ENCODE measurements at regions of chr2 and their contacts with region 1.

Region 1: GRCh38 chr2:9555297-9556141 is at the start of gene ADAM17:
- DNase-seq: peak; percentile 88 to 92
- ATAC-seq: peak; percentile 88 to 97 (median 95)
- H3K4me3 ChIP-seq: peak within 1 kb of the TSS; percentile 69
- H3K4me3 Mint-ChIP-seq: peak within 1 kb of the TSS; percentile 98
- H3K27ac ChIP-seq: peak within 1 kb of the TSS; percentile 100
- H3K27ac Mint-ChIP-seq: peak within 1 kb of the TSS; percentile 92 to 97
- H3K4me1 ChIP-seq: peaks cover 18% of the 10 kb centered on the region
- H3K4me1 Mint-ChIP-seq: peaks cover 52 to 59% of the 10 kb centered on the region in 2 donors
- H3K27me3 ChIP-seq: no peaks in the 10 kb centered on the region
- H3K27me3 Mint-ChIP-seq: no peaks in the 10 kb centered on the region
- CTCF ChIP-seq: peak; percentile 27
- total RNA-seq, gene ADAM17: 44.0 to 53.8 (median 46.8) TPM

Region 2: GRCh38 chr2:9423100-9423921 is 132.2 kb before region 1 on chr2 and contains the starts of genes CPSF3 and ITGB1BP1:
- intact Hi-C with region 1: loop called (anchors 10 kb)
- DNase-seq: peak; percentile 92 to 99
- ATAC-seq: peak; percentile 86 to 94 (median 91)
- H3K4me3 ChIP-seq: peak within 1 kb of the TSS; percentile 86
- H3K4me3 Mint-ChIP-seq: no peak within 1 kb of the TSS
- H3K27ac ChIP-seq: peak within 1 kb of the TSS; percentile 84
- H3K27ac Mint-ChIP-seq: no peak within 1 kb of the TSS
- H3K4me1 ChIP-seq: peaks cover 25% of the 10 kb centered on the region
- H3K4me1 Mint-ChIP-seq: peaks cover 27 to 28% of the 10 kb centered on the region in 2 donors
- H3K27me3 ChIP-seq: no peaks in the 10 kb centered on the region
- H3K27me3 Mint-ChIP-seq: no peaks in the 10 kb centered on the region
- CTCF ChIP-seq: no peak
- total RNA-seq, gene CPSF3: 28.4 to 30.7 (median 28.7) TPM
- total RNA-seq, gene ITGB1BP1: 66.9 to 114 (median 91.7) TPM

Region 3: GRCh38 chr2:9594366-9595054 is 39.0 kb after region 1 on chr2:
- intact Hi-C with region 1: loop called (anchors 5 kb)
- DNase-seq: no peak
- ATAC-seq: peak; percentile 19 to 35 (median 21)
- H3K4me3 ChIP-seq: no peak overlapping the region
- H3K4me3 Mint-ChIP-seq: peak overlapping the region; percentile 22
- H3K27ac ChIP-seq: no peak overlapping the region
- H3K27ac Mint-ChIP-seq: peak overlapping the region; percentile 25 to 85
- H3K4me1 ChIP-seq: peaks cover 21% of the 10 kb centered on the region
- H3K4me1 Mint-ChIP-seq: peaks cover 68 to 76% of the 10 kb centered on the region in 2 donors
- H3K27me3 ChIP-seq: no peaks in the 10 kb centered on the region
- H3K27me3 Mint-ChIP-seq: no peaks in the 10 kb centered on the region
- CTCF ChIP-seq: no peak

Region 4: DNA sequence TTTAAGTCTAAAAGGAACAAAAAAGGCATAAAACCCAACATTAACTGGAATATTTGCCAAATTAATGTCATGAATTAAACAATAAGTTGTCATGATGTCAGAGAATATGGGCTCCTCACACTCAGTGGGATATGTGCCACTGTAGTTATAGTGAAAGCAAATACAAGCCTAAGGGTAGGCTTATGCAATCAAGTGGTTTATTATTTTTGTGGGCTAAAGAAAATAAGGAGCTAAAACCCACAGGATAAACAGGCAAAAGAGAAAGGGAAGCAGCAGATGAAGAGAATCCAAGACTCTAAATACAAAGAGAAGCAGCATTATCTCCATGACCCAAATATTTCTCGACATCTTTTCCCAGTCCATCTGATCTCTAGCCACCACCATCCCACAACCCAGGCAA is 57.8 kb after region 1 on chr2:
- intact Hi-C with region 1: loop called (anchors 5 kb)
- DNase-seq: no peak
- ATAC-seq: peak in 2 of 3 donors; percentile 44 to 52
- H3K4me3 ChIP-seq: no peak overlapping the region
- H3K4me3 Mint-ChIP-seq: no peak overlapping the region
- H3K27ac ChIP-seq: no peak overlapping the region
- H3K27ac Mint-ChIP-seq: peak overlapping the region; percentile 47 to 56
- H3K4me1 ChIP-seq: peaks cover 16% of the 10 kb centered on the region
- H3K4me1 Mint-ChIP-seq: peaks cover 86 to 97% of the 10 kb centered on the region in 2 donors
- H3K27me3 ChIP-seq: no peaks in the 10 kb centered on the region
- H3K27me3 Mint-ChIP-seq: no peaks in the 10 kb centered on the region
- CTCF ChIP-seq: no peak

Region 5: GRCh38 chr2:9630749-9631483 is 75.4 kb after region 1 on chr2 and contains the start of gene YWHAQ:
- intact Hi-C with region 1: loop called (anchors 2 kb)
- DNase-seq: peak; percentile 99
- ATAC-seq: peak; percentile 85 to 96 (median 87)
- H3K4me3 ChIP-seq: peak within 1 kb of the TSS; percentile 68
- H3K4me3 Mint-ChIP-seq: peak within 1 kb of the TSS; percentile 96
- H3K27ac ChIP-seq: peak within 1 kb of the TSS; percentile 94
- H3K27ac Mint-ChIP-seq: peak within 1 kb of the TSS; percentile 94 to 97
- H3K4me1 ChIP-seq: peaks cover 32% of the 10 kb centered on the region
- H3K4me1 Mint-ChIP-seq: peaks cover 54 to 59% of the 10 kb centered on the region in 2 donors
- H3K27me3 ChIP-seq: no peaks in the 10 kb centered on the region
- H3K27me3 Mint-ChIP-seq: no peaks in the 10 kb centered on the region
- CTCF ChIP-seq: no peak
- total RNA-seq, gene YWHAQ: 227 to 240 (median 238) TPM

Region 6: GRCh38 chr2:9708683-9709538 is 153.4 kb after region 1 on chr2:
- intact Hi-C with region 1: no loop called
- DNase-seq: no peak
- ATAC-seq: no peak
- H3K4me3 ChIP-seq: no peak overlapping the region
- H3K4me3 Mint-ChIP-seq: no peak overlapping the region
- H3K27ac ChIP-seq: no peak overlapping the region
- H3K27ac Mint-ChIP-seq: no peak overlapping the region
- H3K4me1 ChIP-seq: peaks cover 26% of the 10 kb centered on the region
- H3K4me1 Mint-ChIP-seq: peaks cover 26 to 57% of the 10 kb centered on the region in 2 donors
- H3K27me3 ChIP-seq: no peaks in the 10 kb centered on the region
- H3K27me3 Mint-ChIP-seq: no peaks in the 10 kb centered on the region
- CTCF ChIP-seq: no peak

Measured in natural killer cell (primary cell).